ENCODE measurements at regions of chr1 and their contacts with region 1.

Region 1: DNA sequence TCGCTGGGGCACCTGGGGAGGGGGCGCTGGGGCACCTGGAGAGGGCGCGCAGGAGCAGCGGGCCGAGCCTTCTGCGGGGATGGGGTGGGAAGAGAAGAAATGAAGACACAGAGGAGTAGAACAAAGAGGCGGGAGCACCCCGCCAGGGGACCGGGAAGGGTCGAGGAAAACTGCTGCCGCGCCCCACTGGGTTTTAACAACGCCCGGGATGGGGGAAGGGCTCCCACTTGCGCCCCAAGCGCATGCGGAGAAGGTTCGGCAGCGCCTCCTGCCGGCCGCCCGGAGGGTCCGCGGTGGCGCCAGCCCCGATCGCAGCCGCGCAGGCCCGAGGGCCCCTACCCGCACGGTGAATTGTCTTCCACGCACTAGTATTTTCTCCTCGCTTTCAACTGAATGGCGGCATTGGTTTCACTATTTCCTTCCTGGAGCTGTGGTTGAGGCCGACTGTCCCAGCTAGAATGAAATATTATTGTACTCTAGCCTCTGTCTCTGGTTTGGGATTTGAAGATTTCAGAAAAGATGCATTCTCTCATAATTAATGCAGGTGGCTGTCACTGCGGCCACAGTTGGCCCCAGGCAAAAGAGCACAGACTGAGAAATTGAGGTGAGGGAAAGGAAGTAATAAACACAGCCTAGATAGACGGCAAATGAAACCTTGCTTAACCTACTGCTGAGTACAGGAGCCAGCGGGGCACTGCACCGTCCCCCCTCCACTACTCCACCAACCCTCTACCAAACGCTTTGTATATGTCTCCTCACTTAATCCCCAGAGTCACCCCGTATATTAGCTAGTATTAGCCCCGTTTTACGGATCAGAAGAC is 57.3 kb downstream of the MAB21L3 start:
- DNase-seq: peak in 1 of 2 donors; percentile 87
- H3K4me3 ChIP-seq: peak overlapping the region; percentile 73 to 75
- H3K27ac ChIP-seq: peak overlapping the region; percentile 62 to 65
- H3K4me1 ChIP-seq: peaks cover 16 to 22% of the 10 kb centered on the region in 2 donors
- H3K27me3 ChIP-seq: no peaks in the 10 kb centered on the region
- CTCF ChIP-seq: peak; percentile 88 to 94 (median 94)

Region 2: GRCh38 chr1:116104667-116105205 is 63.8 kb before region 1 on chr1:
- intact Hi-C with region 1: no loop called
- DNase-seq: no peak
- H3K4me3 ChIP-seq: no peak overlapping the region
- H3K27ac ChIP-seq: no peak overlapping the region
- H3K4me1 ChIP-seq: no peaks in the 10 kb centered on the region
- H3K27me3 ChIP-seq: no peaks in the 10 kb centered on the region
- CTCF ChIP-seq: no peak

Region 3: GRCh38 chr1:116151739-116152576 is 16.5 kb before region 1 on chr1:
- intact Hi-C with region 1: loop called (anchors 1 kb)
- DNase-seq: peak in 1 of 2 donors; percentile 87
- H3K4me3 ChIP-seq: peak overlapping the region; percentile 35 to 64
- H3K27ac ChIP-seq: no peak overlapping the region
- H3K4me1 ChIP-seq: peaks cover 0 to 2% of the 10 kb centered on the region in 2 donors
- H3K27me3 ChIP-seq: no peaks in the 10 kb centered on the region
- CTCF ChIP-seq: peak; percentile 87 to 94 (median 93)